ENCODE measurements at regions of chr10 and their contacts with region 1.

Region 1: DNA sequence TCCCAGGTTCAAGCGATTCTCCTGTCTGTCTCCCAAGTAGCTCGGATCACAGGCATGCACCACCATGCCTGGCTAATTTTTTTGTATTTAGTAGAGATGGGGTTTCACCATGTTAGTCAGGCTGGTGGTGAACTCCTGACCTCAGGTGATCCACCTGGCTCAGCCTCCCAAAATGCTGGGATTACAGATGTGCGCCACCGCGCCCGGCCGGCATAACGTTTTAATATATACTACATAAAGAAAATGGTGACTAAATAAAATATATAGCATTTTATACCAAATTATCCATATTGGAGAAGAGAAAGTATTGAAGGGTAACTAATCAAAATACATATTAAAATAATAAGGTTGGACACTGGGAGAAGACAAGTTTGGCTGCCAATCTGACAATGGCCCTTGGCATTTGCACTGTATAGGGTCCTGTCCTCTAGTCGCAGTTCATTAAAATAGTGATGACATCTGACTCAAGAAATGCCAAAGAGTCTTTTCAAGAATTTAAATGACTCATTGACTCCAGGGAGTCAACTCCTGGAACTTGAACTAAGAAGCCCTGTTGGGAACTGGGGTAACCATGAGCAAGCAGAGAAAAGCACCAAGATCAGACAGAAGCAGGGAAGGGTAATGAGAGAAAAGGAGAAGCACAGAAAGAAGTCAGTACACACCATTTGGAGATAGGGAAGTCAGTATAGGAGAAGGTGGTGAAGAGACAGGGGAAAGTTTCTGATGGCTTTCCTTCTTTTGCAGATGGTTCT is 91.1 kb downstream of the CH25H start:
- DNase-seq: no peak
- ATAC-seq: peak in 3 of 4 donors; percentile 32 to 60 (median 38)
- H3K4me3 ChIP-seq: no peak overlapping the region
- H3K27ac ChIP-seq: peak overlapping the region in 3 of 12 donors; percentile 27 to 58 (median 31)
- H3K4me1 ChIP-seq: peaks cover 0 to 25% (median 0%) of the 10 kb centered on the region in 12 donors
- H3K27me3 ChIP-seq: no peaks in the 10 kb centered on the region
- CTCF ChIP-seq: no peak
- POLR2A ChIP-seq: no peak

Region 2: GRCh38 chr10:89079961-89080360 is 36.1 kb before region 1 on chr10:
- intact Hi-C with region 1: loop called in 1 of 10 experiments (anchors 5 kb)
- DNase-seq: no peak
- ATAC-seq: peak in 1 of 4 donors; percentile 36
- H3K4me3 ChIP-seq: no peak overlapping the region
- H3K27ac ChIP-seq: peak overlapping the region in 1 of 12 donors; percentile 38
- H3K4me1 ChIP-seq: peaks cover 0 to 31% (median 3%) of the 10 kb centered on the region in 12 donors
- H3K27me3 ChIP-seq: no peaks in the 10 kb centered on the region
- CTCF ChIP-seq: no peak
- POLR2A ChIP-seq: no peak

Region 3: DNA sequence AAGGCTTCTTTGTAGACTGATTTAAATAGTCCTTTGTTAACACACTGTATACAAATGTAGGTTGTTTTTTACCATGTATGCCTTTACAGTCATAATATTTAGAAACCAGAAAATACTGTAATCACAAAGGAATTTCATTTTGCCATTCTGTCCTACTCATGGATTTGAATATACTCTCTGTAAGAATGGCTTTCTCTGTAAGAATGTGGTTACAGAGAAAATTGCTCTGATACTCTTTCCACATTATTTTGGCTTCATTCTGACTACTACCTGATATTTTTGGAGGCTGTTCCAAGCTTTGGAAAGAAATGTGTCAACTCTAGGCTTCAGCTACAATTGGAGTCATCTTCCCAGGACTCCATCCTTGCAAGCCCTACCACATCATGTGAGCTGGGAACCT is 67.5 kb after region 1 on chr10:
- intact Hi-C with region 1: no loop called
- DNase-seq: no peak
- ATAC-seq: no peak
- H3K4me3 ChIP-seq: no peak overlapping the region
- H3K27ac ChIP-seq: no peak overlapping the region
- H3K4me1 ChIP-seq: peaks cover 0 to 6% (median 0%) of the 10 kb centered on the region in 12 donors
- H3K27me3 ChIP-seq: no peaks in the 10 kb centered on the region
- CTCF ChIP-seq: no peak
- POLR2A ChIP-seq: no peak

Region 4: DNA sequence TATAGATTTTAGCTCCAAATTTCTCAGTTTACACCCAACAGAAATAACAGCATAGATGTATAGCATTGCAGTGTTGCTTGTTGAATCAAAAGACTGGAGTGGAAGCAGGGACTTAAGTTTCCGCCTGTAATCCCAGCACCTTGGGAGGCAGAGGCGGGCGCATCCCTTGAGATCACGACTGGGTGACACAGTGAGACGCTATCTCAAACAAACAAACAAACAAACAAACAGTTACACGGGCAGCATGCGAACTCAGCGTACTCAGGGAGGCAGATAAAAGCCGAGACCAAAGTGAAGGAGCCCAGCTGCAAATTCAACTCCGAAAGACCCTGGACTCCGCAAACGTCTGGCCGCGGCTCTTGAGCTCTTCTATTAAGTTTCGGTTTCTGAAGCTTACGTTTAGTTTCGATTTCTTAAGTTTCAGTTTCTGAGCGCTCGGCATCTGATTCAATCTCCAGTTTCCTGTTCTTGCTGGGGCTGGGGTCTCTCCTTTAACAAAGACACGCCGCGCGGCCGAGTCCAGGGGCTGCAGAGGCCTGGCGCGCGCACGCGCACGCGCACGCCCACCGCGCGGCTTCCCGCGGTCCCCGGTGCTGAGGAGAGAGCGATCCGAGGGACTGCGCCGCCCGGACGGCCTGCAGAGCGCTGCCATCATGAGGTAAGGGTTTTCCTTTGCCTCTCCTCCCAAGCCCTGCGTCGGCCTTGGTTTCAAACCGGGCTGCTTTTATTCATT is 298.3 kb after region 1 on chr10 and contains the start of gene IFIT5:
- intact Hi-C with region 1: no loop called
- DNase-seq: peak; percentile 74 to 87 (median 78)
- ATAC-seq: peak; percentile 79 to 95 (median 92)
- H3K4me3 ChIP-seq: peak within 1 kb of the TSS; percentile 75 to 95 (median 86)
- H3K27ac ChIP-seq: peak within 1 kb of the TSS; percentile 92 to 99 (median 96)
- H3K4me1 ChIP-seq: peaks cover 0 to 53% (median 33%) of the 10 kb centered on the region in 12 donors
- H3K27me3 ChIP-seq: no peaks in the 10 kb centered on the region
- CTCF ChIP-seq: peak in 3 of 12 donors; percentile 23 to 30 (median 25)
- POLR2A ChIP-seq: peak in 1 of 2 donors; percentile 38
- total RNA-seq, gene IFIT5: 5.4 to 21.0 (median 10.4) TPM